ENCODE measurements at regions of chr1 and their contacts with region 1.

Region 1: GRCh38 chr1:21782868-21783678 is at the start of gene USP48:
- DNase-seq: peak; percentile 97
- H3K4me3 Mint-ChIP-seq: peak within 1 kb of the TSS; percentile 87
- H3K27ac Mint-ChIP-seq: peak within 1 kb of the TSS; percentile 99
- H3K4me1 Mint-ChIP-seq: peaks cover 16% of the 10 kb centered on the region
- H3K27me3 Mint-ChIP-seq: no peaks in the 10 kb centered on the region
- CTCF ChIP-seq: no peak
- total RNA-seq, gene USP48: 60.2 and 64.8 TPM in 2 replicates

Region 2: GRCh38 chr1:21490774-21491553 is 292.1 kb before region 1 on chr1:
- CTCF ChIA-PET with region 1: no interaction called
- POLR2A ChIA-PET with region 1: no interaction called
- intact Hi-C with region 1: no loop called
- DNase-seq: peak; percentile 59
- H3K4me3 Mint-ChIP-seq: no peak overlapping the region
- H3K27ac Mint-ChIP-seq: no peak overlapping the region
- H3K4me1 Mint-ChIP-seq: no peaks in the 10 kb centered on the region
- H3K27me3 Mint-ChIP-seq: peaks cover 12% of the 10 kb centered on the region
- CTCF ChIP-seq: peak; percentile 61

Region 3: GRCh38 chr1:21703318-21703963 is 79.6 kb before region 1 on chr1:
- CTCF ChIA-PET with region 1: interaction called, 6 read pairs
- POLR2A ChIA-PET with region 1: interaction called, 4 read pairs
- intact Hi-C with region 1: loop called (anchors 1 kb)
- DNase-seq: peak; percentile 50
- H3K4me3 Mint-ChIP-seq: no peak overlapping the region
- H3K27ac Mint-ChIP-seq: peak overlapping the region; percentile 15
- H3K4me1 Mint-ChIP-seq: no peaks in the 10 kb centered on the region
- H3K27me3 Mint-ChIP-seq: no peaks in the 10 kb centered on the region
- CTCF ChIP-seq: peak; percentile 44

Region 4: DNA sequence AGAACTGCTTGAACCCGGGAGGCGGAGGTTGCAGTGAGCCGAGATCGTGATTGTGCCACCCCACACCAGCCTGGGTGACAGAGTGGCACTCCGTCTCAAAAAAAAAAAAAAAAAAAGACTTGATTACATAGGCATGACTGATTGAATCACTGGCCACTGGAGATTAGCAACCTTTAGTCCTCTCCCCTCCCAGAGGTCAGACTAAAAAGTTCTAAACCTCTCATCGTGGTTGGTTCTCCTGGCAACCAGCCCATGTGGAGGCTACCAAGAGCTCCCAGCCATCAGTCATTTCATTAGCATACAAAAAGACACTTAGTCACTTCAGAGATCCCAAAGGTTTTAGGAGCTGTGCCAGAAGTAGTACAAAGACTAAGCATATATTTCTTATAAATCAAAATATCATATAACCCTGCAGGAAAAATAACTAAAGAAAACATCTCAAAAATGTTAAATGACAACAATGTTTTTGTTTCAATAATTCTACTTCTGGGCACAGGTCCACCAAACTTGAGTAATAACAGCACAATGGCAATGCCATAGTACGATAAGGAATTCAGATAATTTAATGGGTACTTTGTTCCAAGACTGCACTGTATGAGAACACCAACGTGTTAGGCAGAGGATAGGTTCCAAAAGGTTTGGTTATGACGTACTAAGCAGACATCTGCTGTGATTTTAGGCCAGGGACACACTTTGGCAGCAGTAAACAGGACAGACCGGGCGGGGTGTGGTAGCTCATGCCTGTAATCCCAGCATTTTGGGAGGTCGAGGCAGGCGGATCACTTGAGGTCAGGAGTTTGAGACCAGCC is 18.3 kb before region 1 on chr1:
- CTCF ChIA-PET with region 1: interaction called, 5 read pairs
- POLR2A ChIA-PET with region 1: interaction called, 63 read pairs
- intact Hi-C with region 1: no loop called
- DNase-seq: peak; percentile 96
- H3K4me3 Mint-ChIP-seq: peak overlapping the region; percentile 48
- H3K27ac Mint-ChIP-seq: peak overlapping the region; percentile 80
- H3K4me1 Mint-ChIP-seq: peaks cover 33% of the 10 kb centered on the region
- H3K27me3 Mint-ChIP-seq: no peaks in the 10 kb centered on the region
- CTCF ChIP-seq: no peak

Region 5: GRCh38 chr1:21869620-21870121 is 86.6 kb after region 1 on chr1:
- CTCF ChIA-PET with region 1: no interaction called
- POLR2A ChIA-PET with region 1: interaction called, 9 read pairs
- intact Hi-C with region 1: loop called (anchors 10 kb)
- DNase-seq: peak; percentile 97
- H3K4me3 Mint-ChIP-seq: no peak overlapping the region
- H3K27ac Mint-ChIP-seq: no peak overlapping the region
- H3K4me1 Mint-ChIP-seq: peaks cover 24% of the 10 kb centered on the region
- H3K27me3 Mint-ChIP-seq: no peaks in the 10 kb centered on the region
- CTCF ChIP-seq: no peak

Region 6: GRCh38 chr1:21956720-21957552 is 173.9 kb after region 1 on chr1:
- CTCF ChIA-PET with region 1: interaction called, 3 read pairs
- POLR2A ChIA-PET with region 1: interaction called, 34 read pairs
- intact Hi-C with region 1: no loop called
- DNase-seq: peak; percentile 99
- H3K4me3 Mint-ChIP-seq: peak overlapping the region; percentile 63
- H3K27ac Mint-ChIP-seq: peak overlapping the region; percentile 83
- H3K4me1 Mint-ChIP-seq: peaks cover 18% of the 10 kb centered on the region
- H3K27me3 Mint-ChIP-seq: no peaks in the 10 kb centered on the region
- CTCF ChIP-seq: no peak

Region 7: GRCh38 chr1:22025368-22026155 is 242.5 kb after region 1 on chr1:
- CTCF ChIA-PET with region 1: interaction called, 3 read pairs
- POLR2A ChIA-PET with region 1: interaction called, 26 read pairs
- intact Hi-C with region 1: no loop called
- DNase-seq: peak; percentile 88
- H3K4me3 Mint-ChIP-seq: peak overlapping the region; percentile 79
- H3K27ac Mint-ChIP-seq: peak overlapping the region; percentile 93
- H3K4me1 Mint-ChIP-seq: peaks cover 13% of the 10 kb centered on the region
- H3K27me3 Mint-ChIP-seq: no peaks in the 10 kb centered on the region
- CTCF ChIP-seq: no peak